ENCODE measurements at regions of chr1 and their contacts with region 1.

Region 1: GRCh38 chr1:211830330-211831142 is at the start of gene LPGAT1:
- DNase-seq: peak; percentile 81 to 92 (median 91)
- ATAC-seq: peak; percentile 94 to 97
- H3K4me3 ChIP-seq: peak within 1 kb of the TSS; percentile 98
- H3K27ac ChIP-seq: peak within 1 kb of the TSS; percentile 90
- H3K4me1 ChIP-seq: peaks cover 6% of the 10 kb centered on the region
- H3K27me3 ChIP-seq: no peaks in the 10 kb centered on the region
- total RNA-seq, gene LPGAT1: 34.3 to 58.8 (median 39.9) TPM

Region 2: DNA sequence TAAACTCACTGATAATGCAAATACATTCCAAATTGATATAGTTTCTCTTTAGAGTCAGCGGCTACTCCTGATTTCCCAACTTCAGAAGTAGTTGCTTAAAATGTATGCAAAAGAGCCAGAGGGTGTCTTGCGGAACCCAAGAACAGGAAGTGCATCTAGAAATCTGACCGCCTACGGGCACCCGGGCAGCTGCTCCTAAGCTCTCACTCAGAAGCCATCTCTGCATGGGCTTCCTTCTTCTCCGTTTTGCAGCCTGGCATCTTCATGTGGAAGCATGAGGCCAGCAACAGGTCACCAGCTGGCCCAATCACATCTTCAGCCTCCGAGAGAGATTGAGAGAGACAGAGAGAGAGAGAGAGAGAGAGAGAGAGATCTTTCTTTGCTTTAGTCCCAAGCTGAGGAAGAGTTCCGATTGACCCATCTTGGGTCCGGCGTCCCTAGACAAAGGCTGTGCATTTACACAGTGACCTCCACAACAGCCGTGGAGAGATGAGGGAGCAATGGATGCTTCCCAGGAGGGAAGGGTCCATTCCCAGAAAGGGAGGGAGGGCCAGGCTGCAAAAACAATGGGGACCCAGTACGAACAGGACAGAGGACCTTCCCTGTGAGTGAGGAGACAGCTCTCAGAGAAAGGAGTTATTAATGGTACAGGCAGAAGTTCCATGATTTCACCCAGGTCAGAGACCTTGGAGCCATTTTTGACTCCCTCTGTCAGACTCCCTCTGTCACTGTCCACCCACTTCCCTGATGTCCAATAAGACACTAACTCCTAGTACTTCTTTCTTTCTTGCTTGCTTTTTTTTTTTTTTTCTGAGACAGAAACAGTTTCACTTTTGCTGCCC is 223.4 kb before region 1 on chr1:
- intact Hi-C with region 1: no loop called
- DNase-seq: peak in 1 of 3 donors; percentile 66
- ATAC-seq: peak; percentile 41 to 60
- H3K4me3 ChIP-seq: no peak overlapping the region
- H3K27ac ChIP-seq: no peak overlapping the region
- H3K4me1 ChIP-seq: no peaks in the 10 kb centered on the region
- H3K27me3 ChIP-seq: no peaks in the 10 kb centered on the region

Region 3: GRCh38 chr1:211680752-211681327 is 149.7 kb before region 1 on chr1:
- intact Hi-C with region 1: loop called in 1 of 4 experiments (anchors 10 kb)
- DNase-seq: peak; percentile 63 to 86 (median 82)
- ATAC-seq: peak; percentile 89 to 90
- H3K4me3 ChIP-seq: no peak overlapping the region
- H3K27ac ChIP-seq: no peak overlapping the region
- H3K4me1 ChIP-seq: no peaks in the 10 kb centered on the region
- H3K27me3 ChIP-seq: no peaks in the 10 kb centered on the region

Region 4: GRCh38 chr1:211698161-211699026 is 132.1 kb before region 1 on chr1:
- intact Hi-C with region 1: loop called in 3 of 4 experiments (anchors 5 to 10 kb)
- DNase-seq: peak; percentile 64 to 90 (median 89)
- ATAC-seq: peak; percentile 82 to 86
- H3K4me3 ChIP-seq: no peak overlapping the region
- H3K27ac ChIP-seq: no peak overlapping the region
- H3K4me1 ChIP-seq: peaks cover 2% of the 10 kb centered on the region
- H3K27me3 ChIP-seq: no peaks in the 10 kb centered on the region

Region 5: GRCh38 chr1:211705467-211706091 is 125.0 kb before region 1 on chr1:
- intact Hi-C with region 1: loop called in 1 of 4 experiments (anchors 10 kb)
- DNase-seq: no peak
- ATAC-seq: peak in 1 of 2 donors; percentile 33
- H3K4me3 ChIP-seq: no peak overlapping the region
- H3K27ac ChIP-seq: no peak overlapping the region
- H3K4me1 ChIP-seq: no peaks in the 10 kb centered on the region
- H3K27me3 ChIP-seq: no peaks in the 10 kb centered on the region

Region 6: DNA sequence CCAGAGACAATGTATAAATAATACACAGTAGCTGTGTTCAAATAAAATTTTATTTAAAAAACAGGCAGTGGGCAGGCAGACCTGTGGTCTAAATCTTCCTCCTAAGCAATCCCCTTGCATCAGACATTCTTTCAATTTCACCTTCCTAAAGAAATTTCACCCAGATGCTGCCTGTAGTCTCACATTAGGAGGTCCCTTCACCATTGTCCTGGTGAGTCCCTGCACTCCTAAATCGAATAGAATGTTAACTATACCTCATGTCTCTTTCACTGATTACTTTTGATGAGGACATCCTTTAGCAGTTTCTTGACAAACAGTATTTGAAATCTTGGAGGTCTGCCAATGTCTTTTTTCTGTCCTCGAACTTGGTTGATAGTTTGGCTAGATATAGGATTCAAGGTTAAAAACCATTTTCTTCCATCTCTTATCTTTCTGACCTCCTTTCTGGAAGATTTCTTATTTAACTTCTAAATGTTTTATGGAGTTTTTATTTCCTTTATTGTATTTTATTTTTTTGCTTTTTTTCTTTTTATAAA is 77.5 kb before region 1 on chr1:
- intact Hi-C with region 1: no loop called
- DNase-seq: no peak
- ATAC-seq: no peak
- H3K4me3 ChIP-seq: no peak overlapping the region
- H3K27ac ChIP-seq: no peak overlapping the region
- H3K4me1 ChIP-seq: peaks cover 4% of the 10 kb centered on the region
- H3K27me3 ChIP-seq: no peaks in the 10 kb centered on the region

Region 7: DNA sequence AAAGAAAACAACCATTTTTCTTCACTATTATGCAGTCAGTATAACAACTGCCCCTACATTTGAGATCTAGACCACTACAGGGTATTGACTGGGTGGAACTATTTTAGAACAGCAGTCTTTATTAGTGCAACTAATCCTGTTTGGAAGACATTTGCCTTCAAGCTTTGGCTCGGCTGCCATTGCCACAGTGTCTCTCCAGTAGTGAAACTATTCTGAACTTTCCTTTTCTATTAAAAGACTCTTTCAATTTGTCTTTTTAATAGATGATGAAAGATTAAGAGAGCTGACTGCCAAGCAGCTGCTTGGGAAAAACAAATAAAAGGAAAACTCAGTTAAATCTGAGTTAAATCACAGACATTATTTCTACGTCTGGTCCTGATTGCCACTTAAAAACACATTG is 49.3 kb before region 1 on chr1:
- intact Hi-C with region 1: no loop called
- DNase-seq: no peak
- ATAC-seq: no peak
- H3K4me3 ChIP-seq: no peak overlapping the region
- H3K27ac ChIP-seq: no peak overlapping the region
- H3K4me1 ChIP-seq: peaks cover 4% of the 10 kb centered on the region
- H3K27me3 ChIP-seq: no peaks in the 10 kb centered on the region

Region 8: GRCh38 chr1:211944733-211945500 is 114.4 kb after region 1 on chr1:
- intact Hi-C with region 1: loop called in 2 of 4 experiments (anchors 10 kb)
- DNase-seq: peak in 2 of 3 donors; percentile 37 to 55
- ATAC-seq: peak; percentile 80 to 91
- H3K4me3 ChIP-seq: no peak overlapping the region
- H3K27ac ChIP-seq: no peak overlapping the region
- H3K4me1 ChIP-seq: no peaks in the 10 kb centered on the region
- H3K27me3 ChIP-seq: no peaks in the 10 kb centered on the region